AG04450 (cell line): ENCODE measurements at regions of chr16 and their contacts with region 1.

Region 1: DNA sequence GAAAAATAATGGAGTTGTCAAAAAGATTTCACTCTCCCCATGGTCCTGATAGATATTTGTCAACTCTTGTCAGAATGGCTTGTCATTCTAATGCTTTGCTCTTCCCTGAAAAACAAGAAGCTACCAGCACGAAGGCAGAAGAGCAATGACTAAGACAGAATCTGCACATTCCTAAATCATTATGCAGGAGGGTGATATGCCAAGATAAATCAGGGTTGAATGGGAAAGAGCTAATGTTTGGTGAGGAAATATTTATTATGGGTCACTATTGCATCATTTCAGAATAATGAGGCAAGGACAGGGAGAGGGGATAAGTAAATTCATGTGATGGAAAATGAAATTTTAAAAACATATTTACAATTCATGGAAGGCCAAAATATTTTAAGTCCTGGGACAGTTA is 297.5 kb upstream of the XYLT1 start:
- DNase-seq: no peak
- H3K4me3 ChIP-seq: no peak overlapping the region
- H3K27ac ChIP-seq: no peak overlapping the region
- H3K27me3 ChIP-seq: no peaks in the 10 kb centered on the region
- CTCF ChIP-seq: no peak

Region 2: GRCh38 chr16:17070882-17071592 is 697.2 kb before region 1 on chr16:
- CTCF ChIA-PET with region 1: no interaction called
- POLR2A ChIA-PET with region 1: no interaction called
- DNase-seq: no peak
- H3K4me3 ChIP-seq: no peak overlapping the region
- H3K27ac ChIP-seq: no peak overlapping the region
- H3K27me3 ChIP-seq: no peaks in the 10 kb centered on the region
- CTCF ChIP-seq: no peak

Region 3: GRCh38 chr16:17784073-17784472 is 15.8 kb after region 1 on chr16:
- CTCF ChIA-PET with region 1: no interaction called
- POLR2A ChIA-PET with region 1: no interaction called
- DNase-seq: no peak
- H3K4me3 ChIP-seq: no peak overlapping the region
- H3K27ac ChIP-seq: no peak overlapping the region
- H3K27me3 ChIP-seq: no peaks in the 10 kb centered on the region
- CTCF ChIP-seq: no peak

Region 4: DNA sequence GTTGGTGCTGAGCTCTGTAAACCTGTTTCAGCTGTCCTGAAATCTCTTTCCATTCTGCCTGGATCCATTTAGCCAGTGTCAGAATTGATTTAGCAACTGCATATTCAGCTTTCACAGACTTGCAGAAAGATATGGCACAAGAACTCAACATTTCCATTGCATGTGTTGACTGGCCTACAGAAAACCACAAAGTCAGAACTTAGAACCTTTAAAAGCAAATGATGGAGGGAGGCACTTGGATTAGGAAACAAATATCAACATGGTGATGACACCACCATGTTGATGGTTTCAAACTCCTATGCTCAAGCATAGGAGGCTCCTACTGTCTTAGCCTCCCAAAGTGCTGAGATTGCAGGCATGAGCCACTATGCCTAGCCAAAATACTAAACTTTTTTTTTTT is 1085.4 kb after region 1 on chr16:
- CTCF ChIA-PET with region 1: no interaction called
- POLR2A ChIA-PET with region 1: interaction called, 10 read pairs
- DNase-seq: no peak
- H3K4me3 ChIP-seq: no peak overlapping the region
- H3K27ac ChIP-seq: no peak overlapping the region
- H3K27me3 ChIP-seq: no peaks in the 10 kb centered on the region
- CTCF ChIP-seq: no peak